A673 (cell line): ENCODE measurements at regions of chr11 and their contacts with region 1.

Region 1: GRCh38 chr11:35927730-35928129 is 16.1 kb upstream of the LDLRAD3 start:
- DNase-seq: peak; percentile 72
- H3K4me3 ChIP-seq: peak overlapping the region; percentile 4
- H3K27ac ChIP-seq: no peak overlapping the region
- H3K4me1 ChIP-seq: peaks cover 11% of the 10 kb centered on the region
- H3K27me3 ChIP-seq: no peaks in the 10 kb centered on the region
- CTCF ChIP-seq: no peak

Region 2: GRCh38 chr11:35897019-35897418 is 30.7 kb before region 1 on chr11:
- CTCF ChIA-PET with region 1: no interaction called
- POLR2A ChIA-PET with region 1: no interaction called
- intact Hi-C with region 1: no loop called
- DNase-seq: no peak
- H3K4me3 ChIP-seq: no peak overlapping the region
- H3K27ac ChIP-seq: no peak overlapping the region
- H3K4me1 ChIP-seq: no peaks in the 10 kb centered on the region
- H3K27me3 ChIP-seq: no peaks in the 10 kb centered on the region
- CTCF ChIP-seq: no peak

Region 3: DNA sequence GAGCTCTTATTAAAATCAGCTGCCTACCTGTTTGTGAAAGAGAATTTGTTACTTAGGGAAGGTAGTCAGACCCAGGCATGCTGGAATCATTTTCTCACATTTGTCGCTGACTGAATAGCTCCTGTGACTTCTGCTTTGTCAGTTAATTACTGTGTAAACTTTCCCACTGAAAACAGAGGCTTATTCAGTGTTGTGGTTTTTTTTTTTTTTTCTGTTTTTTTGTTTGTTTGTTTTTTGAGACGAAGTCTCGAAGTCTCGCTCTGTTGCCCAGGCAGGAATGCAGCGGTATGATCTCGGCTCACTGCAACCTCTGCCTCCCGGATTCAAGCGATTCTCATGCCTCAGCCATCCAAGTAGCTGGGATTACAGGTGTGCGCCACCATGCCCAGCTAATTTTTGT is 10.5 kb after region 1 on chr11:
- CTCF ChIA-PET with region 1: no interaction called
- POLR2A ChIA-PET with region 1: interaction called, 14 read pairs
- intact Hi-C with region 1: no loop called
- DNase-seq: no peak
- H3K4me3 ChIP-seq: no peak overlapping the region
- H3K27ac ChIP-seq: no peak overlapping the region
- H3K4me1 ChIP-seq: no peaks in the 10 kb centered on the region
- H3K27me3 ChIP-seq: peaks cover 26% of the 10 kb centered on the region
- CTCF ChIP-seq: no peak

Region 4: DNA sequence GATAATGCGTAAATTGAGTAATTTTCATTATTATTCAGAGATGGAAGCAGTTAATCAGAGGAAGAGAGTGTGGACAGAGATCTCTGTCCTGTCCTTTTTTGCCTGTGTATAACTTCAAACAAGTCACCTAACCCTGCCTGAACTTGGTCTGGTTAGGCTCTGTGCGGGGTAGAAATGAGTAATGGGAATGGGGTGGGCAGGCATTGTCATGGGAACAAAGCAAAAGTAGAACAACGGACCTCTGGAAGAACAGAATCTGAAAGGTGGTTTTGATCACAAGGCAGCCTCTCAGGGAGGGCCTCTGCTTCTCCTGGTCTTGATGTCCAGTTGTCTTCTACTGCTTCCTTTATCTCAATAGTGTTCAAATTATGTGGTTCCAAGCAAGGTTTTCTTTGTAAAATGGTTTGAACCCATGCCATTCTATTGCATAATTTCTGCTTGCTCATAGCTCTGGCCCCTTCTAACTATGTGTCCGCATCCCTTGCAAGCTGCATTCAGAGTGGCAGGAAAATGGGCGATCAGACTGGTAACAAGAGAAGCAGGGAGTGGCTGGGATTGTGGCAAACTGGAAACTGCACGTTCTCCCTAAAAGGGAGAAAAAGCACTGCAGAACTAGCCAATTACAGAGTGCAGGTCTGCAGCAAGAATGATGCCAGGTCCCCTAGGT is 444.5 kb after region 1 on chr11:
- CTCF ChIA-PET with region 1: no interaction called
- POLR2A ChIA-PET with region 1: no interaction called
- intact Hi-C with region 1: no loop called
- DNase-seq: peak; percentile 73
- H3K4me3 ChIP-seq: no peak overlapping the region
- H3K27ac ChIP-seq: peak overlapping the region; percentile 85
- H3K4me1 ChIP-seq: peaks cover 39% of the 10 kb centered on the region
- H3K27me3 ChIP-seq: no peaks in the 10 kb centered on the region
- CTCF ChIP-seq: no peak